Common myeloid progenitor, CD34-positive (primary cell): ENCODE measurements at regions of chr17 and their contacts with region 1.

Region 1: GRCh38 chr17:50151041-50151936 is 812 bp upstream of the PPP1R9B start:
- DNase-seq: peak; percentile 90 to 95 (median 93)
- H3K4me3 ChIP-seq: peak overlapping the region; percentile 56 to 88 (median 82)
- H3K27ac ChIP-seq: peak overlapping the region in 1 of 2 experiments; percentile 79
- H3K4me1 ChIP-seq: peaks cover 6 to 80% (median 70%) of the 10 kb centered on the region in 4 experiments
- H3K27me3 ChIP-seq: no peaks in the 10 kb centered on the region

Region 2: GRCh38 chr17:50094753-50095619 is 56.3 kb before region 1 on chr17 and contains the start of gene PDK2:
- CTCF ChIA-PET with region 1: interaction called, 10 read pairs
- POLR2A ChIA-PET with region 1: no interaction called
- DNase-seq: peak; percentile 97 to 99 (median 98)
- H3K4me3 ChIP-seq: peak within 1 kb of the TSS; percentile 77 to 97 (median 84)
- H3K27ac ChIP-seq: peak within 1 kb of the TSS; percentile 61 to 85
- H3K4me1 ChIP-seq: peaks cover 0 to 24% (median 19%) of the 10 kb centered on the region in 4 experiments
- H3K27me3 ChIP-seq: no peaks in the 10 kb centered on the region

Region 3: DNA sequence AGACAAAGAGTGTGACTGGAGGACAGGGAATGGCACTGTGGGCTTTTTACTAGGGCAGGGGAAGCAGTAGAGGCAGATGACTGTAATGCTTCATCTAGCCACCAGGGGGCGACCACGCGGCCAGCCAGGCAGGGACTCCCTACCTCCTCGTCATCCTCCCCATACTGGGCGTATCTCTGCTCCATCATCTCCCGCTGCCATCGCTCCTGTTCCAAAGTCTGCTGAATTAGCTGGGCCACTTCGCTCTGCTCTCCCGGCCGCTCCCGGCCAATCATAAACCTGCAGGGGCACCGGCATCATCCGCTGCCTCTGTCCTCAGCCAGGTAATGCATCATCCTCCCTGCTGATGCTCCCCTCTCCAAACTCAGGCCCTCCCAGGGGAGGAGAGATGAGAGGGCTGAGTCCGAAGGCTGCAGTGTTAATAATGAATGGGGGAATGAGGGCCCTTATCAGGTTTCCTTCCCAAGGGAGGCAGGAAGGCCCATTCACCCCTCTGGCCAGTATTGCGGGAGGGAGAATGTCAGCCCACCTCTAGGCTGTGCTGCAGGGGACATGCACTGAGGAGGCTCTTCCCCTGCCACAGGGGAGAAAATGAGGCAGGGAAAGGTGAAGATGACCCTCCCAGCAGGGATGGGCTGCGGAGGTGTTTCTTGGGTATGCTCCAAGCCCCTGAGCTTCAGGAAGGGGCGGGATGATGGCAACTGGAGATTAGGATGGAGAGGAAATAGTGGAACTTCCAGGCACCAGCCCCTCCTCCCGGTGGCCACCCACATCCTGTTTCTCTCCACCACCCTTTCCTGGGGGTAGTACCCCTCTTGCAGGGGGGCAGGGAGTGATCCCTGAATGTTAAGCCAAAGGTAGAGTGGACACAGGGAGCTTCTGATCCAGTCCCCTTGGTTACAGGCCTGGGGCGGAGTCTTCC is 11.1 kb before region 1 on chr17:
- CTCF ChIA-PET with region 1: interaction called, 82 read pairs
- POLR2A ChIA-PET with region 1: interaction called, 13 read pairs
- DNase-seq: peak; percentile 68 to 80 (median 79)
- H3K4me3 ChIP-seq: peak overlapping the region in 5 of 7 experiments; percentile 14 to 64 (median 35)
- H3K27ac ChIP-seq: no peak overlapping the region
- H3K4me1 ChIP-seq: peaks cover 3 to 51% (median 47%) of the 10 kb centered on the region in 4 experiments
- H3K27me3 ChIP-seq: no peaks in the 10 kb centered on the region